A549 (cell line): ENCODE measurements at regions of chr20 and their contacts with region 1.

Region 1: GRCh38 chr20:60210779-60211617 is 252.8 kb downstream of the CDH26 start:
- DNase-seq: peak; percentile 47 to 49
- ATAC-seq: peak; percentile 91 to 98
- H3K4me3 ChIP-seq: no peak overlapping the region
- H3K27ac ChIP-seq: no peak overlapping the region
- H3K4me1 ChIP-seq: no peaks in the 10 kb centered on the region
- CTCF ChIP-seq: peak; percentile 73
- EP300 ChIP-seq: no peak
- POLR2A ChIP-seq: no peak
- RAD21 ChIP-seq: peak; percentile 85 to 91

Region 2: GRCh38 chr20:60192326-60192725 is 18.7 kb before region 1 on chr20:
- CTCF ChIA-PET with region 1: interaction called, 23 read pairs
- POLR2A ChIA-PET with region 1: no interaction called
- DNase-seq: no peak
- ATAC-seq: no peak
- H3K4me3 ChIP-seq: no peak overlapping the region
- H3K27ac ChIP-seq: no peak overlapping the region
- H3K4me1 ChIP-seq: no peaks in the 10 kb centered on the region
- CTCF ChIP-seq: no peak
- EP300 ChIP-seq: no peak
- POLR2A ChIP-seq: no peak
- RAD21 ChIP-seq: no peak

Region 3: DNA sequence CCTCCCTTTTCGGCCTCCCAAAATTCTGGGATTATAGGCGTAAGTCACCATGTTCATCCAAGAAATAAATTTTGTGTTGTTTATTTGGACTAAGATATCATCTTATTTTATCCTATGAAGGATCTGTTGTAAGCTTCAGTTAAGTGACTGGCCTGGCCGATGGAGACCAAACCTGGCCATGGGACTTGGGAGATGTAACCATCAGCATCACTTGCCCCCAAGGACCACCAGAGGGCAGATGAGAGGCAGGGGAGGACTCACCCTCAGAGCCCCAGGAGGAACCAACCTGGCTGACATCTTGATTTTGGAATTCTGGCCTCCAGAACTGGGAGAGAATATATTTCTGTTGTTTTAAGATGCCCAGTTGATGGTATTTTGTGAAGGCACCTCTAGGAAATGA is 13.9 kb after region 1 on chr20:
- CTCF ChIA-PET with region 1: interaction called, 20 read pairs
- POLR2A ChIA-PET with region 1: no interaction called
- DNase-seq: peak; percentile 22 to 31
- ATAC-seq: peak; percentile 54 to 80; a peak in 4 of 6 replicates
- H3K4me3 ChIP-seq: no peak overlapping the region
- H3K27ac ChIP-seq: no peak overlapping the region
- H3K4me1 ChIP-seq: no peaks in the 10 kb centered on the region
- CTCF ChIP-seq: no peak; the same call in 2 of the 3 replicates
- EP300 ChIP-seq: no peak
- POLR2A ChIP-seq: no peak
- RAD21 ChIP-seq: peak in 1 of 2 experiments; percentile 49; a peak in 3 of 5 replicates

Region 4: DNA sequence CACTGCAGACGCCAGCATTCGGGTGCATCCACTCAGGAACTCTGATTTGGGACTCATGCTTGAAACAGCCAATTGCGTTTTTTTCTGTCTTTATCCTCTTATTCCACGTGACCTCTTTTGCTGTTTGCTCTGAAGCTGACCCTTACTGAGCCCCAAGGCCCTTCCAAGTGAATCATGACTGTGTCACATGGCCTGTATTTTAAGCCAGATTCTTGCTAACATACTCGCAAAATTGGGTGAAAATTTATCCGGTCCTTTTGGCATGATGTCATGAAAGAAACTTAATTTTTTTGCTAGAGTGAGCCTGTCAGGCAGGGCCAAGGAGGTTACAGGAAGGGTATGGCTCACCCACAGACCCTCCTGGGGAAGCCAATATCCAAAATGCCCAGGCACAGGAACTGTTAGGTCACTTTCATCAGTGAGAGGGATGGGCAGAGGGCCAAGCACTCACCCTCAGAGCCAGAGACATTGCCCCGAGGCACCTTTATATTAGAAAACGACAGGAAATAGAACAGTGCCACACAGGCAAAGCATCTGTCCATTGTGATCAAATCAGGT is 43.9 kb after region 1 on chr20:
- CTCF ChIA-PET with region 1: interaction called, 43 read pairs
- POLR2A ChIA-PET with region 1: no interaction called
- DNase-seq: no peak
- ATAC-seq: no peak
- H3K4me3 ChIP-seq: no peak overlapping the region
- H3K27ac ChIP-seq: no peak overlapping the region
- H3K4me1 ChIP-seq: no peaks in the 10 kb centered on the region; the same call in 2 of the 3 replicates
- CTCF ChIP-seq: no peak
- EP300 ChIP-seq: no peak
- POLR2A ChIP-seq: no peak
- RAD21 ChIP-seq: no peak

Region 5: GRCh38 chr20:60262967-60263603 is 52.1 kb after region 1 on chr20:
- CTCF ChIA-PET with region 1: interaction called, 43 read pairs
- POLR2A ChIA-PET with region 1: no interaction called
- DNase-seq: peak; percentile 21 to 30
- ATAC-seq: peak in 1 of 2 experiments; percentile 58; a peak in 2 of 6 replicates
- H3K4me3 ChIP-seq: no peak overlapping the region
- H3K27ac ChIP-seq: no peak overlapping the region
- H3K4me1 ChIP-seq: no peaks in the 10 kb centered on the region
- CTCF ChIP-seq: peak; percentile 40; the same call in 2 of the 3 replicates
- EP300 ChIP-seq: no peak
- POLR2A ChIP-seq: no peak
- RAD21 ChIP-seq: peak in 1 of 2 experiments; percentile 43; a peak in 2 of 5 replicates

Region 6: DNA sequence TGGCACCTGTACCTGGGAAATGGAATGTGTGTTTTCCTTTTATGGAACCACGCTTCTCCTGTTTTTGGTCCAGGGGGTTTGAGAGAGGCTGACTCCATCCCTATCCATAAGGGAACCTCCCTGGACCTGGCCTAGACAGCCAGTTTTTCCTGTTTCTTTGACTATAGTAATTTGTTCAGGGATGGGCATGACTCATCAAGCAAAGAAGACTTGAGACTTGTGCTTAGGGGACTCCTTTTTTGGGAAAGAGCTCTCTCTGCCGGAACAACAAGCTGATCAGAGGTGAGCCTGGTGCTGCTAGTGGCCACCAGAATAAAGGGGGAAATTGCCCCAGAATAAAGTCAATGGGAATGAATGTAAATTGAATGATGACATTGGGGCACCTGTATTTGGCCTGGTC is 141.1 kb after region 1 on chr20:
- CTCF ChIA-PET with region 1: no interaction called
- POLR2A ChIA-PET with region 1: no interaction called
- DNase-seq: no peak
- ATAC-seq: no peak
- H3K4me3 ChIP-seq: no peak overlapping the region
- H3K27ac ChIP-seq: no peak overlapping the region
- H3K4me1 ChIP-seq: no peaks in the 10 kb centered on the region
- CTCF ChIP-seq: no peak
- EP300 ChIP-seq: no peak
- POLR2A ChIP-seq: no peak
- RAD21 ChIP-seq: no peak

Region 7: DNA sequence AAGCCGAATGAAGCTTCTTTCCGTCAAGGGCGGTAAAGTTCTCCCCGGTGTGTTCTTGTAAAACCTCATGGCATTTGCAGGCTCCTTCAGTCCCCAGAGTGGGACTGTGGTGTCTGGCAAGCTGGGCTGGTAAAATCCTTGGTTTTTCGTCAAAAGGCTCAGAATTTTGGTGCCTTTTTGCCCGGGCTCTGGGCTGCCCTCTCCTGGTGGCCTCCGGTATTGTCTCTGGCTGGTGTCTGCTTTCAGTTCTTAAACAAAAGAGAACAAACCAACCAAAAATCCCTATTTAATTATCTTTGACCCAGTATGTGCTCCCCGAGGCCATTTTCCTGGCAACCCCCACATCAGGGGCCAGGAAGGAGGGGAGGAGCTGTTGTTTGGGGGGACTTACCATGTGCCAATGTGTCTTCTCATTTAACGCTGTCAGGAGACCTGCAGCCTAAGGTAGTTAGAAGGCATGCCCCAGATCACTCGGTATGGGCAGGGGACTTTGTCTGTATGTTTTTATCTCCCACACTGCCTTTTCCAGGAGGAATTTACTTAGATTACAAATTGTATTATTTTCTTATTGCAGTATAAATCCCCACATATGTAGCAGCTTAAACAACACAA is 1052.2 kb after region 1 on chr20:
- CTCF ChIA-PET with region 1: interaction called, 14 read pairs
- POLR2A ChIA-PET with region 1: no interaction called
- DNase-seq: peak in 1 of 2 experiments; percentile 29
- ATAC-seq: peak in 1 of 2 experiments; percentile 22; a peak in 1 of 6 replicates
- H3K4me3 ChIP-seq: no peak overlapping the region
- H3K27ac ChIP-seq: no peak overlapping the region
- H3K4me1 ChIP-seq: no peaks in the 10 kb centered on the region
- CTCF ChIP-seq: peak; percentile 77
- EP300 ChIP-seq: no peak
- POLR2A ChIP-seq: no peak
- RAD21 ChIP-seq: peak; percentile 54 to 64; a peak in 4 of 5 replicates

Region 8: GRCh38 chr20:61886721-61887594 is 1676.0 kb after region 1 on chr20:
- CTCF ChIA-PET with region 1: interaction called, 10 read pairs
- POLR2A ChIA-PET with region 1: no interaction called
- DNase-seq: peak; percentile 45 to 57
- ATAC-seq: peak; percentile 77 to 90; a peak in 5 of 6 replicates
- H3K4me3 ChIP-seq: no peak overlapping the region
- H3K27ac ChIP-seq: no peak overlapping the region
- H3K4me1 ChIP-seq: no peaks in the 10 kb centered on the region
- CTCF ChIP-seq: peak; percentile 71
- EP300 ChIP-seq: no peak
- POLR2A ChIP-seq: no peak
- RAD21 ChIP-seq: peak; percentile 70 to 74